Activated CD8-positive, alpha-beta memory T cell treated with anti-CD3 and anti-CD28 coated beads, Interleukin-2, amount 10 ng/mL, durations not matched to agents 7 days and 5 days (primary cell): ENCODE measurements at regions of chr17 and their contacts with region 1.

Region 1: GRCh38 chr17:57861000-57861789 is 11.4 kb upstream of the MRPS23 start:
- DNase-seq: peak; percentile 47
- ATAC-seq: peak; percentile 60
- H3K4me3 Mint-ChIP-seq: peak overlapping the region; percentile 41
- H3K27ac Mint-ChIP-seq: no peak overlapping the region
- H3K4me1 Mint-ChIP-seq: peaks cover 14% of the 10 kb centered on the region
- H3K27me3 Mint-ChIP-seq: peaks cover 46% of the 10 kb centered on the region

Region 2: DNA sequence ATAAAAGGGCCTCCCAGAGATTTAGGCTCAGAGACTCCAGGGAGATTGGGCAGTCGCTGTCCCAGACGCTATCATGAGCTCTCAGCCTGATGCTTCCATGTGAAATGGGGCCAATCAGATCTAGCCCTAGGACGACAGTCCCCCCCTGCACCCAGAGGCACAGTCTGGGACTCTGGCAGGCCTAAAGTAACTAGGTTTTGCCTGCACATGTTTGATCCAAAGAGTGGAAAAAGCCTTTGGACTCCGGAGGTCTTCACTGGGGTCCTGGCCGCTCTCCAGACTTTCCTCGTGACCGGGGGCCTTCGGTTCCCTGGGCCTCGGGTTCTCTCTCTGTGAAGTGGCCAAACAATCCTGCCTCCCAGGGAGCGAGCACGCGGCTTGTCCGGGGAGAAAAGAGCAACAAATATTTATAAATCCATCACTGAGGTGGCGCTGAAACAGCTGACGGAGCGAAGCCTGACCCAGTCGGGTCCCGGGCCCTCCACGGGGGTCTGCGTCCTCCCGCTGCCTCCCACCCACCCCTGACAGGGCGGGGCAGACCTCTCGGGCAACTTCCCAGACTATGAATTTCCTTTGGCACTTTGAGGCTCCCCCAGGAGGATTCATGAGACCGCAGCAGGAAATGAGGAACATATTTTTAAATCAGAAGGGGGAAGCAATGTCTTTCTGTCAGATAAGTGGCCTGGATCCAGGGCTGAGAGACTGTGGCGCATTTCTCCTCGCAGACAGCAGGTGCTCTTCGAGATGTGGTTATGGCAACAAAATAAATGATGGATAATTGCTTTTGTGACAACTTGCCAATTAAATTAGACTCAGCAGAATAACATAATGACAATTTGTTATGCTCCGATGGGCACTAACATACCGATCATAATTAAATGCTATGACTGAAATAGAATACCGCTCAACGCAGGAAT is 50.2 kb before region 1 on chr17:
- CTCF ChIA-PET with region 1: no interaction called
- DNase-seq: no peak
- ATAC-seq: no peak
- H3K4me3 Mint-ChIP-seq: no peak overlapping the region
- H3K27ac Mint-ChIP-seq: no peak overlapping the region
- H3K4me1 Mint-ChIP-seq: no peaks in the 10 kb centered on the region
- H3K27me3 Mint-ChIP-seq: peaks cover 72% of the 10 kb centered on the region

Region 3: DNA sequence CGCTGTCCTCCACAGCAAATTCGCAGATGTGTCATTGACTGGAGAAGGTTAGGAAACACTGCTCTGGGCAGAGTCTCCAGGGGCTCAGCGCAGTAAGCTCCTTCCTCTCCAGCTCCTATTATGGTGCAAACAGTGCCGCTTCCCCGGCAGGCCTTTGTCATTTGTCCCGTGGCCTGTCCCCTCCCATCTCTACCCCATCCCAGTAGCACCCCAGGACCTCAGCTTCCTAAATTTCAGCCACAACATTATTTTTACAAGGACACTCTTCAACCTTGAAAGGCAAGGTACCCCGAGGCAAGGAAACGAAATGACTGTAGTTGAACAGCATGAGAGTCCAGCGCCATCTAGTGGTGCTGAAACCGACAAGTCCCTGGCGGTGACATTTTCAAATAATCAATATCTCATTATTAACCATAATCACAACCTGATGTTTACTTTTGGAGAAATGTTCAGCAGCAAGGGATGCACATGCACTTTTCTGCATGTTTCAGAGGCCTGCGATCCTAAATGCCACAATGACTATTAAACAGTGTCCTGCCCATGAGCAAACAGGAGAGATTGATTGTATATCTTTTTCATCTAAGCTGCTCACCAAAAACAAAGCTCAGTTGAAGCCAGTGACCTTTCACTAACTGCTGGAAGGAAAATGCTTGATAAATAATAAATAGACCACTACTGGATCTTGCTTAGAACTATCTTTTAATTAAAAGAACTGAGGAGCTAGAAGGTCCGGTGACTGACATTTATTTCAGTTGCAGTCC is 27.8 kb before region 1 on chr17:
- CTCF ChIA-PET with region 1: interaction called, 13 read pairs
- DNase-seq: peak; percentile 82
- ATAC-seq: peak; percentile 78
- H3K4me3 Mint-ChIP-seq: no peak overlapping the region
- H3K27ac Mint-ChIP-seq: no peak overlapping the region
- H3K4me1 Mint-ChIP-seq: peaks cover 4% of the 10 kb centered on the region
- H3K27me3 Mint-ChIP-seq: no peaks in the 10 kb centered on the region

Region 4: GRCh38 chr17:57849874-57850754 is 11.1 kb before region 1 on chr17 and contains the start of gene MRPS23:
- CTCF ChIA-PET with region 1: interaction called, 25 read pairs
- DNase-seq: peak; percentile 99
- ATAC-seq: peak; percentile 93
- H3K4me3 Mint-ChIP-seq: peak within 1 kb of the TSS; percentile 97
- H3K27ac Mint-ChIP-seq: peak within 1 kb of the TSS; percentile 100
- H3K4me1 Mint-ChIP-seq: peaks cover 37% of the 10 kb centered on the region
- H3K27me3 Mint-ChIP-seq: no peaks in the 10 kb centered on the region
- total RNA-seq, gene MRPS23: 39.4 to 49.4 TPM

Region 5: DNA sequence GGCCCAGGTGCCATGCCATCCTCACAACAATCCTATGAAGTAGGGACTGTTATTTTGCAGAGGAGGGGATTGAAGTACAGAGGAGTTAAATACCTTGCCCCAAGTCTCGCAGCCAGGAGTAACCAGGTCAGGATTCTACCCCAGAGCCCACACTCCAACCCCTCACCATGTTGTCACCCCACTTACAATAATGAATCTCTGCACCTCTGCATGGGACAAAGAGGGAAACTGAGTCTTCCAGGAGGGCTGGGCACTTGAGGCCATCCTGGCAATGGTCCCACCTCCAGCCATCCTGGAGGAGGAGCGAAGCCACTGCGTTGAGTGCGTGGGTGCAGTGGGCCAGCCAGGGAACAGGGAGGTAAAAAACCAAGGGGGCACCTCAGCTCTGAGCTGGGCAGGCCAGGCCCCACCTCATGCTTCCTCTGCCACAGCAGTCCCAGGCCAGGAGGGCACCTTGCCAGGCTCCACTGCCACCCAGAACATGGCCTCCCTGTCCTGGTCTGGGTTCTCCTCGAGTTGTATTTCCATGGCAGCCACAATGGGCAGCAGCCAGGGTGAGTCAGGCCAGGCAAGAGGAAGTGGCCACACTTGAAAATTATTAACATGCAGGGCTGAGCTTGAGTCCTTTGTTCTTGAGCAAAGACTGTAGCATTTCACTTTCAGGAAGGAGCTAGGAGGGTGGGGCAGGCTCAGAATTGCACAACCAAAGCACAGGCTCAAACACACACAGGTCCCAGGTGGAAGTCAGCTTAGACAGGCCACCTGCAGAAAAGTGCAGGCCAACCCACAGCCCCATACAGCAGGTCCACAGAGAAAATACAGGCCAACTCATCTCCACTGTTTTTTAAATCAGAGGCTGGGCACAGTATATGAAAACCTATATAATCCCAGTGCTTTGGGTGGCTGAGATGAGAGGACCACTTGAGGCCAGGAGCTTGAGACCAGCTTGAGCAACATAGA is 41.9 kb after region 1 on chr17:
- CTCF ChIA-PET with region 1: no interaction called
- DNase-seq: no peak
- ATAC-seq: no peak
- H3K4me3 Mint-ChIP-seq: no peak overlapping the region
- H3K27ac Mint-ChIP-seq: no peak overlapping the region
- H3K4me1 Mint-ChIP-seq: peaks cover 30% of the 10 kb centered on the region
- H3K27me3 Mint-ChIP-seq: no peaks in the 10 kb centered on the region

Region 6: GRCh38 chr17:57987580-57988421 is 126.6 kb after region 1 on chr17 and contains the start of gene VEZF1:
- CTCF ChIA-PET with region 1: interaction called, 121 read pairs
- DNase-seq: peak; percentile 84
- ATAC-seq: peak; percentile 77
- H3K4me3 Mint-ChIP-seq: peak within 1 kb of the TSS; percentile 95
- H3K27ac Mint-ChIP-seq: peak within 1 kb of the TSS; percentile 88
- H3K4me1 Mint-ChIP-seq: peaks cover 63% of the 10 kb centered on the region
- H3K27me3 Mint-ChIP-seq: no peaks in the 10 kb centered on the region
- total RNA-seq, gene VEZF1: 33.2 to 37.6 TPM

Region 7: GRCh38 chr17:57995076-57995956 is 134.1 kb after region 1 on chr17:
- CTCF ChIA-PET with region 1: interaction called, 121 read pairs
- DNase-seq: peak; percentile 66
- ATAC-seq: peak; percentile 80
- H3K4me3 Mint-ChIP-seq: peak overlapping the region; percentile 0
- H3K27ac Mint-ChIP-seq: peak overlapping the region; percentile 47
- H3K4me1 Mint-ChIP-seq: peaks cover 64% of the 10 kb centered on the region
- H3K27me3 Mint-ChIP-seq: no peaks in the 10 kb centered on the region

Region 8: GRCh38 chr17:58112970-58113631 is 251.9 kb after region 1 on chr17:
- CTCF ChIA-PET with region 1: interaction called, 38 read pairs
- DNase-seq: peak; percentile 88
- ATAC-seq: peak; percentile 86
- H3K4me3 Mint-ChIP-seq: no peak overlapping the region
- H3K27ac Mint-ChIP-seq: no peak overlapping the region
- H3K4me1 Mint-ChIP-seq: peaks cover 1% of the 10 kb centered on the region
- H3K27me3 Mint-ChIP-seq: peaks cover 10% of the 10 kb centered on the region